ENCODE measurements at regions of chr17 and their contacts with region 1.

Region 1: GRCh38 chr17:80426681-80427326 is 11.8 kb downstream of the ENDOV start:
- DNase-seq: peak in 1 of 2 experiments; percentile 71
- H3K4me3 ChIP-seq: no peak overlapping the region
- H3K27ac ChIP-seq: no peak overlapping the region
- H3K4me1 ChIP-seq: no peaks in the 10 kb centered on the region
- H3K27me3 ChIP-seq: no peaks in the 10 kb centered on the region
- CTCF ChIP-seq: peak; percentile 82

Region 2: DNA sequence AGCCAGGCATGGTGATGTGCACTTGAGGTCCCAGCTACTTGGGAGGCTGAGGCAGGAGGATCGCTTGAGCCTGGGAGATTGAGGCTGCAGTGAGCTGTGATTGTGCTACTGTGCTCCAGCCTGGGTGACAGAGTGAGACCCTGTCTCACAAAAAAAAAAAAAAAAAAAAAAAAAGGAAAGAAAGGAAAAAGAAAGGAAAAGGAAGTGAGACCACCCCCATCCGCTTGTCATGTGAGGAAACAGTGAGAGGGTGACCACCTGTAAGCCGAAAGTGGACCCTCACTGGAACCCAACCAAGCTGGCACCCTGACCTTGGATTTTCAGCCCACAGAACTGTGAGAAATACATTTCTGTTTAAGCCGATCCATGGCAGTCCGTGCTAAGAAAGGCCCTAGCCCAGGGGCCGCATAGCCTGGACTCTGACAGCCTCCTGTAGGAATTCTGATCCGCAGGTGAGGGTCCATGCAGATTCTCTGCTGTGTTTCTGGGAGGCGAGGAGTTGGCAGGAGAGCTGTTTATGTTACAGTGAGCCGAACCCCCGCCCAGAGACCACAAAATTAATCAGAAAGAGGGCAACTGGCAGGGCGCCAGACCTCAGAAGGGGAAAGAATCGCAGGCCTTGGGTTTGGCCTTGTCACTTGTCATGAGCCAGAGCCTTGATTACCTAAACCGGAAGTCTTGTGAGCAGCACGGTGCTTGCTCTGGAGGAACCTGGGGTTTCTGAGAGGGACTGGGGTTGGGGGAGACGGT is 207.6 kb before region 1 on chr17:
- CTCF ChIA-PET with region 1: no interaction called
- POLR2A ChIA-PET with region 1: interaction called, 11 read pairs
- intact Hi-C with region 1: no loop called
- DNase-seq: peak; percentile 58 to 81
- H3K4me3 ChIP-seq: peak overlapping the region; percentile 71
- H3K27ac ChIP-seq: no peak overlapping the region
- H3K4me1 ChIP-seq: peaks cover 6% of the 10 kb centered on the region; the same call in 1 of the 2 replicates
- H3K27me3 ChIP-seq: no peaks in the 10 kb centered on the region
- CTCF ChIP-seq: no peak

Region 3: DNA sequence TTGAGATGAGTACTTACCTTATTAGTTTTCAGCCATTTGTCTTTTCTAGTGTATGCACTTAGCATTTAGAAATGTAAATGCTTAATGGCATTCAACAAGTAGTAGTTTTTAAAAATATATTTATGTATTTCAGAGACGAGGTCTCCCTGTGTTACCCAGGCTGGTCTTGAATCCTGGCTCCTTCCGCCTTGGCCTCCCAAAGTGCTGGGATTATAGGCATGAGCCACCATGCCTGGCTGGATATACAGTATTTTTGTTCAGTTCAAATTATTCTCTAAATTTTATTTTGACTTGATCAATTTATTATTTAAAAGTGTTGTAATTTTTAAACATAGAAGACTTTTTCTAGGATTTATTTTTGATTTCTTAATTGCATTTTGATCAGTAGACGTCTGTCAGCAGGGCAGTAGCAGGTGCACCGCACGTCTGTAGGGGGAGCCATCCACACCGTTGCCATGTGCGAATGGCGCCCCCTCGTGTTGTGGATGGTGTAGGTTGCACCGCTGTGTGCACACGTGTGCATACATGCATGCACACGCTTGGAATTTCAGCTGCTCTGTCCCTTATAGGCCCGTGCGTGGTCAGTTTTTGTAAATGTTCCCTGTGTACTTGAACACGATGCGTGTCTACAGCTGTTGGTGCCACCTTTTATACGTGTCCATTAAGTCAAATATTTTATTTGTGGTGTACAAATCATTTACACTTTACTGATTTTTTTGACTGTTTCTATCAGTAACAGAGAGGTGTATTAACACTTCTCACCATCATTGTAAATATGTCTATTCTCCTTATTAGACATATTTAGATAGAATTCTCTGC is 148.5 kb after region 1 on chr17:
- CTCF ChIA-PET with region 1: interaction called, 3 read pairs
- POLR2A ChIA-PET with region 1: no interaction called
- intact Hi-C with region 1: loop called (anchors 1 kb)
- DNase-seq: peak; percentile 66 to 87
- H3K4me3 ChIP-seq: no peak overlapping the region
- H3K27ac ChIP-seq: no peak overlapping the region
- H3K4me1 ChIP-seq: no peaks in the 10 kb centered on the region
- H3K27me3 ChIP-seq: no peaks in the 10 kb centered on the region
- CTCF ChIP-seq: peak; percentile 96

Region 4: DNA sequence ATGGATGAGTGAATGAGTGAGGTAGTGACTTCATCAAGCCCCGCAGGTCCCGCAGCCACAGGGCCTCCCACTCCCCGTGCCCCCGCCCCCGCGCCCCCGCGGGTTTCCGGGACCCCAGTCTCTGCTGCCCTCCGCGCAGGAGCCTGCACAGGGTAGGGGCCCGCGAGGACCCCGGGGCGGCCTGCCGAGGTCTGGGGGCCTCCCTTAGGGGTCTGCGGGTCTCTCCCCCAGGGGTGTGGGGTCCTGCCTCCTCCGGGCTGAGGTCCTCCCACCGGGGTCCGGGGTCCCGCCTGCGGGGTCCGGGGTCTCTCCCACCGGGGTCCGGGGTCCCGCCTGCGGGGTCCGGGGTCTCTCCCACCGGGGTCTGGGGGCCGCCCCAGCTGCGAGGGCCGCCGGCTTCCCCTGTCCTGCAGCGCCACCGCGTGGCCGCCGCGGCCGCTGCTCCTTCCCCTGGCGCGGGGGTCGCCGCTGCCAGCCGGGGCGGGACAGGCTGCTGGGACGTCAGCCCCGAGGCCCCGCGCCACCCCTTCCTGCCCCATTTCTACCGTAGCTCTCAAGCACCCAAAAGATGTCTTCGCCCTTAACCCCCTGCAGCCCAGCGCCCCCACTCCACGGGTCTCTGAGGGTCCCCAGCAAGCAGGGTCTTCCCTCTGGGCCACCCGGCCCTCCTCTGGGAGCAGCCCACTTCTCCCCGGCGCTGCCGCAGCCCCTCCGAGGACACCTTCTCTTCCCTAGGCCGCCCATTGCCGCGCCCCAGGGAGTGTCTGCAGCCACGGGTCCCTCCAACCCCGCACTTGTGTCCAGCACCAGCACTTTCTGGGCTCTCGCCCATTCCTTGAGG is 554.5 kb after region 1 on chr17:
- CTCF ChIA-PET with region 1: no interaction called
- POLR2A ChIA-PET with region 1: no interaction called
- intact Hi-C with region 1: loop called (anchors 5 kb)
- DNase-seq: no peak
- H3K4me3 ChIP-seq: no peak overlapping the region
- H3K27ac ChIP-seq: no peak overlapping the region
- H3K4me1 ChIP-seq: no peaks in the 10 kb centered on the region
- H3K27me3 ChIP-seq: no peaks in the 10 kb centered on the region
- CTCF ChIP-seq: peak; percentile 71